ENCODE measurements at regions of chr13 and their contacts with region 1.

Region 1: GRCh38 chr13:45417790-45418534 is at the start of gene SLC25A30:
- DNase-seq: peak; percentile 95 to 97
- H3K4me3 ChIP-seq: peak within 1 kb of the TSS; percentile 62 to 86
- H3K27ac ChIP-seq: peak within 1 kb of the TSS; percentile 80 to 82
- H3K4me1 ChIP-seq: peaks cover 0 to 34% (median 22%) of the 10 kb centered on the region in 4 donors
- H3K27me3 ChIP-seq: no peaks in the 10 kb centered on the region
- CTCF ChIP-seq: no peak

Region 2: GRCh38 chr13:45464687-45465453 is 46.9 kb after region 1 on chr13 and contains the start of gene COG3:
- intact Hi-C with region 1: loop called (anchors 1 kb)
- DNase-seq: peak; percentile 94 to 97
- H3K4me3 ChIP-seq: peak within 1 kb of the TSS; percentile 90 to 99
- H3K27ac ChIP-seq: peak within 1 kb of the TSS; percentile 92 to 98
- H3K4me1 ChIP-seq: peaks cover 0 to 38% (median 25%) of the 10 kb centered on the region in 4 donors
- H3K27me3 ChIP-seq: no peaks in the 10 kb centered on the region
- CTCF ChIP-seq: peak; percentile 37 to 61

Measured in tibial artery (tissue), 4 donors.